Caco-2 (cell line): ENCODE measurements at regions of chr20 and their contacts with region 1.

Region 1: GRCh38 chr20:18578581-18578980 is 9.3 kb upstream of the DTD1 start:
- DNase-seq: no peak
- H3K4me3 ChIP-seq: no peak overlapping the region
- H3K4me3 Mint-ChIP-seq: peak overlapping the region; percentile 61
- H3K27ac Mint-ChIP-seq: peak overlapping the region; percentile 79
- H3K4me1 ChIP-seq: peaks cover 20% of the 10 kb centered on the region
- H3K4me1 Mint-ChIP-seq: peaks cover 11% of the 10 kb centered on the region
- H3K27me3 ChIP-seq: no peaks in the 10 kb centered on the region
- H3K27me3 Mint-ChIP-seq: no peaks in the 10 kb centered on the region
- CTCF ChIP-seq: no peak

Region 2: GRCh38 chr20:18566892-18567742 is 11.5 kb before region 1 on chr20 and contains the start of gene SMIM26:
- CTCF ChIA-PET with region 1: no interaction called
- POLR2A ChIA-PET with region 1: interaction called, 13 read pairs
- intact Hi-C with region 1: no loop called
- DNase-seq: peak; percentile 95
- H3K4me3 ChIP-seq: peak within 1 kb of the TSS; percentile 59
- H3K4me3 Mint-ChIP-seq: peak within 1 kb of the TSS; percentile 84
- H3K27ac Mint-ChIP-seq: peak within 1 kb of the TSS; percentile 74
- H3K4me1 ChIP-seq: no peaks in the 10 kb centered on the region
- H3K4me1 Mint-ChIP-seq: no peaks in the 10 kb centered on the region
- H3K27me3 ChIP-seq: no peaks in the 10 kb centered on the region
- H3K27me3 Mint-ChIP-seq: no peaks in the 10 kb centered on the region
- CTCF ChIP-seq: no peak
- total RNA-seq, gene SMIM26: 96.2 and 99.3 TPM in 2 replicates

Region 3: GRCh38 chr20:18657575-18657974 is 79.0 kb after region 1 on chr20:
- CTCF ChIA-PET with region 1: no interaction called
- POLR2A ChIA-PET with region 1: no interaction called
- intact Hi-C with region 1: no loop called
- DNase-seq: no peak
- H3K4me3 ChIP-seq: no peak overlapping the region
- H3K4me3 Mint-ChIP-seq: no peak overlapping the region
- H3K27ac Mint-ChIP-seq: no peak overlapping the region
- H3K4me1 ChIP-seq: peaks cover 6% of the 10 kb centered on the region; the same call in 1 of the 2 replicates
- H3K4me1 Mint-ChIP-seq: no peaks in the 10 kb centered on the region
- H3K27me3 ChIP-seq: no peaks in the 10 kb centered on the region
- H3K27me3 Mint-ChIP-seq: no peaks in the 10 kb centered on the region
- CTCF ChIP-seq: no peak